GM12878 (cell line): ENCODE measurements at regions of chr14 and their contacts with region 1.

Region 1: DNA sequence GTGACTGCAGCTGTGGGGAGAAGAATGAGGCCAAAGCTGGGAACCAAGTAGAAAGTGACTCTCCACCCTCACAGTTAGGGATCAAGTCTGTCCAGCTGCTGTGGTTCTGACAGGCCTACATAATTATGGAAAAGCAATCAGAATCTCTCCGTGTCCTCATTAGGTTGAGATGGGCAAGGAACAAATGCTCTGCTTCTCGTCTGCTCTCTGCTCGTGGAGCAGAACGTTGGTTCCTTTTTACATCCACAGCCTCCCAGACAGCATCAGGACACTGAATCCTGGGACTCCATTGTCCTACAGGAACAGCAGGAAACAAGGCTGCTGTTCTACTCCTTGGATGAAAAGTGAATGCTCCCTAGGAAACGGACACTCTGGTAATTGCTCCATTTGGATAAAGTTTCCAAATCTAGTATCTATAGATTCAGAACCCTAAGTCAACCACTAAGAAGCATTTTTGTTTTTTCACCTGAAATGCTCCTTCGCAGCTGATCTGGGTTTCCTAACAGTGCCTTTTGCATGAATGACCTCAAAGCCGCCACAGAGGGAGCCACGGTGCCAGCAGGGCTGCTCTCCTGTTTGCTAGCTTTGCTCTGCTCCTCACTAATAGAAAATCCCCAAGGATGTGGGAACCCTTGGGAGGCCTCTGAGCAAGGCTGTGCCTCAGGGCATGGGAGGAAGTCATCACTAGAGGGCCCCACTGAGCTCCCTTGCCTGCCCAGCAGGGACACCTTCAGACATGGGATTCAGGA is 102.0 kb downstream of the EGLN3 start:
- DNase-seq: no peak
- ATAC-seq: peak; percentile 86
- H3K4me3 ChIP-seq: no peak overlapping the region
- H3K27ac ChIP-seq: no peak overlapping the region
- H3K4me1 ChIP-seq: no peaks in the 10 kb centered on the region
- H3K27me3 ChIP-seq: no peaks in the 10 kb centered on the region; a peak in 1 of 4 replicates
- CTCF ChIP-seq: peak; percentile 57 to 74 (median 68)
- EP300 ChIP-seq: no peak
- POLR2A ChIP-seq: no peak
- RAD21 ChIP-seq: peak; percentile 71

Region 2: DNA sequence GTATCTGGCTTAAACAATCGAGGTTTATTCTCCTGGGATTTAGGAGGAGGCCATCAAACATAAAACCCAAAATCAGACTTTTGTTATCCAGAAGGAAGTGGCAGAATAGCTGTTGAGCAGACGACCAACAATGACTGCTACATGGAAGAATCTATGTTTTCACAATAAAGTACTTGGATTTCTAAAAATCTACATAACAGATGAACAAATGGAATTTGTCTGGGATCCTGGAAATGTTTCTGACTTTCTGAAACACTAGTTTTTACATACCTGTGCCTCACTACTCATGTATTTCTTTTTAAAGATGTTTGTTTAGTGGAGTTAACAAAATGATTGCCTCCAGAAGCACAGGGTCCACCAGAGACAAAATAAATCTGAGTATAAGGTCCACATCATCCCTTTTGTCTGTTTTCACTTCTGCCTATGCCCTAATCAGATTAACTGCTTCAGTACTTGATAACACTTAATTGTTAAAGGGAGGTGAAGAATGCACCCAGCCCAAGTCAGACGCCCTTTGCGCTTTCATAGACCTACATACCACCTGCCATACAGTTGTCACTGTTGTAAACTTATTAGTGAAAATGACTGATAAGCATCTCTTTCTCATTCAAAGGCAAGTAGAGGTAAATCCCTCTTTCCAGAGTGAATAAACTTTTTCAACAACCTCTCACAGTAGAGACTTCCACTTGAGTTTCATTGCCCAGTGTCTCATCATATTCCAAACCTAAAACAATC is 62.6 kb before region 1 on chr14:
- CTCF ChIA-PET with region 1: no interaction called
- POLR2A ChIA-PET with region 1: no interaction called
- RAD21 ChIA-PET with region 1: no interaction called
- SMC1A ChIA-PET with region 1: no interaction called
- in situ Hi-C with region 1: no loop called
- intact Hi-C with region 1: no loop called
- DNase-seq: no peak
- ATAC-seq: no peak
- H3K4me3 ChIP-seq: no peak overlapping the region
- H3K27ac ChIP-seq: no peak overlapping the region
- H3K4me1 ChIP-seq: no peaks in the 10 kb centered on the region
- H3K27me3 ChIP-seq: no peaks in the 10 kb centered on the region
- CTCF ChIP-seq: no peak
- EP300 ChIP-seq: no peak
- POLR2A ChIP-seq: no peak
- RAD21 ChIP-seq: no peak

Region 3: GRCh38 chr14:33871394-33871793 is 22.5 kb after region 1 on chr14:
- CTCF ChIA-PET with region 1: interaction called, 10 read pairs
- POLR2A ChIA-PET with region 1: no interaction called
- RAD21 ChIA-PET with region 1: interaction called, 8 read pairs
- SMC1A ChIA-PET with region 1: interaction called, 7 read pairs
- in situ Hi-C with region 1: no loop called
- intact Hi-C with region 1: no loop called
- DNase-seq: no peak
- ATAC-seq: no peak
- H3K4me3 ChIP-seq: no peak overlapping the region
- H3K27ac ChIP-seq: no peak overlapping the region
- H3K4me1 ChIP-seq: no peaks in the 10 kb centered on the region
- H3K27me3 ChIP-seq: no peaks in the 10 kb centered on the region
- CTCF ChIP-seq: no peak
- EP300 ChIP-seq: no peak
- POLR2A ChIP-seq: no peak
- RAD21 ChIP-seq: no peak

Region 4: DNA sequence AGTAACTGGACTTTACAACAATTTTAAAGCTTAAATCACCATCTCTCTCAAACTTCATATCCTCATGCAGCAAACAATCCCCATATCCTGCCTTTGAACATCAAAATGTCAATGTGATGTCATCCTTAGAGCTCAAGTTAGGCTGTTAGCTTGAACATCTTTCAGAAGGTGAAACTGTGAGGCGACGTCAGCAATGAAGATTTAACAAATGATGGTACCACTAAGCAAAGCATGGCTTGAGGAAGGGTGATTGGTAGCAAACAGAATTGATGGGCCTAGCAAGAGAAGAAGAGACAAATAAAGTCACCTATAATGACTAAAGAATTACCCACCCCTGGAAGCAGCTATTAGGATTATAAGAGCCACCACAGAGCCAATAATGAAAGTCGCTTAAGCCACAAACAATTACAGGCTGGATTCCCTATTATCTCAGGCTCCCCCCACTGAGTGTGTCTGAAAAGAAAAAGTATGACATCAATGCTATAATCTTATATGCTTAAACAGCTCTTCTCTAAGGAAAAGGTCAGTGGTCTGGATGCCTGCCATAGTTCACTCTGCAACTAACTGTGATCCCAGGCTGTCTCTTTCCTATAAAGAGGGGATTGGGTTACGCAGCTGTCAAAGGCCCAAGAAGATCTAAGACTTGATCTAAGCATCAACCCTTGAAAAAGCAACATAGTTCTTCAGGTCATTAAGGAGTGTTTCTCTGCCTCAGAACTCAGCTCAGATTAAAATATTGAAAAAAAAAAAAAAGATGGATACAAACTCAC is 83.9 kb after region 1 on chr14:
- CTCF ChIA-PET with region 1: interaction called, 13 read pairs
- POLR2A ChIA-PET with region 1: interaction called, 3 read pairs
- RAD21 ChIA-PET with region 1: interaction called, 17 read pairs
- SMC1A ChIA-PET with region 1: interaction called, 12 read pairs
- in situ Hi-C with region 1: no loop called
- intact Hi-C with region 1: no loop called
- DNase-seq: no peak
- ATAC-seq: no peak
- H3K4me3 ChIP-seq: no peak overlapping the region
- H3K27ac ChIP-seq: no peak overlapping the region
- H3K4me1 ChIP-seq: no peaks in the 10 kb centered on the region
- H3K27me3 ChIP-seq: no peaks in the 10 kb centered on the region
- CTCF ChIP-seq: no peak
- EP300 ChIP-seq: no peak
- POLR2A ChIP-seq: no peak
- RAD21 ChIP-seq: no peak

Region 5: GRCh38 chr14:34051966-34052657 is 203.2 kb after region 1 on chr14:
- CTCF ChIA-PET with region 1: interaction called, 11 read pairs
- POLR2A ChIA-PET with region 1: no interaction called
- RAD21 ChIA-PET with region 1: interaction called, 3 read pairs
- SMC1A ChIA-PET with region 1: interaction called, 3 read pairs
- in situ Hi-C with region 1: no loop called
- intact Hi-C with region 1: no loop called
- DNase-seq: peak; percentile 76
- ATAC-seq: peak; percentile 78
- H3K4me3 ChIP-seq: no peak overlapping the region
- H3K27ac ChIP-seq: no peak overlapping the region
- H3K4me1 ChIP-seq: peaks cover 28% of the 10 kb centered on the region
- H3K27me3 ChIP-seq: no peaks in the 10 kb centered on the region
- CTCF ChIP-seq: no peak
- EP300 ChIP-seq: peak in 1 of 2 experiments; percentile 49; a peak in 1 of 4 replicates
- POLR2A ChIP-seq: no peak
- RAD21 ChIP-seq: no peak

Region 6: DNA sequence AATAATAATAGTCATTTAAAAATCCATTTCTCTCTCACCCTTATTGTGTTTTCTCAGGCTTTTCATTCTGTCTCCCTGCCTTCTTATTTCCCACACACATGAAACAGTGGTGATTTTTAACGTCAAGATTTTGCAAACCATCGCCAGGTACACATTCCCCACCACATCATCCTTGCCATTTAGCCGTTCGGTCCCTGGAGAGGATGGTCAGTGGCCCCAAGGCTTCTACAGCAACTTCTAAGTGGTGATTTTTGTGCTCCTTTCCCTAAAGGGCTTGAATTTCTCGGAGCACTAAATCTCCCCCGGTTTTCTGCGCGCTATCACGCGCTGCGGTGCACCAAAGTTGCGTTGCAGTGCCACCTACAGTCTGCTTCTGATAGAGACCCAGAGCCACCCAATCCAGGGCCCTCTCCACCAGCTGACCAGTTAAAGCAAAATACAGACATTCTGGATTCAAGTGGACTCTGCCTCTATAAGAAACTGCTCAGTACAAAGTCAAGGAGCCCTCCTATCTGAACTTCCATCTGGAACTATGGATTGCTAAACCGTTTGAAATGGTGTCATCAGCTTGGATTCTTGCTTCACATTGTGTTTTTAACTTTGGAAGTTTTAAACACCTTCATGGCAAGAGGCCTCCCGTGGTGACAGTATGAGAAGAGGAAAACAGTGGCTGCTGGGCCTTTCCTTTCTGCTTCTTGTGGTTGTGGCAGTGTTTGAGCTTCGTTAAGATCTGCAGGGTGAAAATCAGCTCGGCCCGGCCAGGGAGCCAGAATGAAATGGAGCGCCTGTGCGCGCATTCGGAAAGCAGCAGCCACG is 379.2 kb after region 1 on chr14:
- CTCF ChIA-PET with region 1: interaction called, 196 read pairs
- POLR2A ChIA-PET with region 1: interaction called, 3 read pairs
- RAD21 ChIA-PET with region 1: interaction called, 42 read pairs
- SMC1A ChIA-PET with region 1: interaction called, 52 read pairs
- in situ Hi-C with region 1: no loop called
- intact Hi-C with region 1: loop called (anchors 1 kb)
- DNase-seq: no peak
- ATAC-seq: peak; percentile 96
- H3K4me3 ChIP-seq: no peak overlapping the region
- H3K27ac ChIP-seq: no peak overlapping the region
- H3K4me1 ChIP-seq: no peaks in the 10 kb centered on the region
- H3K27me3 ChIP-seq: peaks cover 0 to 2% of the 10 kb centered on the region in 2 experiments; a peak in 1 of 4 replicates
- CTCF ChIP-seq: peak; percentile 71 to 78 (median 72); a peak in 5 of 6 replicates
- EP300 ChIP-seq: no peak
- POLR2A ChIP-seq: no peak
- RAD21 ChIP-seq: peak; percentile 81

Region 7: GRCh38 chr14:34322940-34323418 is 474.1 kb after region 1 on chr14:
- CTCF ChIA-PET with region 1: interaction called, 50 read pairs
- POLR2A ChIA-PET with region 1: no interaction called
- RAD21 ChIA-PET with region 1: interaction called, 6 read pairs
- SMC1A ChIA-PET with region 1: interaction called, 6 read pairs
- in situ Hi-C with region 1: no loop called
- intact Hi-C with region 1: no loop called
- DNase-seq: no peak
- ATAC-seq: peak; percentile 95
- H3K4me3 ChIP-seq: no peak overlapping the region
- H3K27ac ChIP-seq: no peak overlapping the region
- H3K4me1 ChIP-seq: no peaks in the 10 kb centered on the region
- H3K27me3 ChIP-seq: no peaks in the 10 kb centered on the region
- CTCF ChIP-seq: peak; percentile 70 to 72 (median 71)
- EP300 ChIP-seq: no peak
- POLR2A ChIP-seq: no peak
- RAD21 ChIP-seq: no peak

Region 8: DNA sequence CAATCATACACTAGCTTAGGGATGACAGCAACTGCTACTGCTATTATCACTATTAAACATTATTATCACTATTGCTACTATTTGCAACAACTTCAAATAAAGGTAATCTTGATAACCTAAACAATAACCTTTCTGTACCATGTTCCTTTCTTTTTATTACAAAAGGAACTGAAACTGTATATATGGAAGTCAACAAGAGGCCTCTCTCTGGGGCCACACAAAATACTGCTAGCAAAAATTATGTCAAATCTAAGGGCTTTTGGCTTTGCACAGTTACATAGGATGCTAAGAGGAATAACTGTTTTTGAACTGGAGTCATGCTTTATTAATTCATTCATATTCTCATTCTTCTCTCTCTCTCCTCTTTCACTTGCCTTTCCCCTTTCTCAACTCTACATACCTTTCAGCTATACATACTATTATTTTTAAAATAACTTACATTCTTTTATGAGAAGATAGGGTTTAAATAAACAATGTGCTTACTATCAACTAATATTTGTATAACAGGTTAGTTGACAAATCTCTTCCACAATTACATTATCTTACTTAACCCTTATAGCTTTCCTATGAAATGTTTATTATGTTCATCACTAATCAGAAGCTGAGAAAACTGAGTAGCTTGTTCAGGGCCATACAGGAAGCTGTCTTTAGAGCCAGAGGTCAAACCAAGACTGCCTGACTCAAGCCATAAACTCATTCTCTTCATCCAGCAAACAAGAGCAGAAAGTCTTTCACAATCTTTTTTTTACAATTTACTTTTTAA is 587.4 kb after region 1 on chr14:
- CTCF ChIA-PET with region 1: no interaction called
- POLR2A ChIA-PET with region 1: no interaction called
- RAD21 ChIA-PET with region 1: no interaction called
- SMC1A ChIA-PET with region 1: no interaction called
- in situ Hi-C with region 1: no loop called
- intact Hi-C with region 1: no loop called
- DNase-seq: no peak
- ATAC-seq: peak; percentile 70
- H3K4me3 ChIP-seq: no peak overlapping the region
- H3K27ac ChIP-seq: 0 out of 2 replicates have a peak overlapping the region, but pooled peaks have one; percentile 3
- H3K4me1 ChIP-seq: peaks cover 4% of the 10 kb centered on the region; the same call in 1 of the 2 replicates
- H3K27me3 ChIP-seq: no peaks in the 10 kb centered on the region
- CTCF ChIP-seq: no peak
- EP300 ChIP-seq: no peak
- POLR2A ChIP-seq: no peak
- RAD21 ChIP-seq: no peak